HepG2 (cell line): ENCODE measurements at regions of chr15 and their contacts with region 1.

Region 1: GRCh38 chr15:43824302-43825246 is at the start of gene MFAP1:
- DNase-seq: peak; percentile 93
- ATAC-seq: peak; percentile 94
- H3K4me3 ChIP-seq: peak within 1 kb of the TSS; percentile 83 to 90 (median 84)
- H3K27ac ChIP-seq: peak within 1 kb of the TSS; percentile 82
- H3K4me1 ChIP-seq: peaks cover 55% of the 10 kb centered on the region
- H3K27me3 ChIP-seq: no peaks in the 10 kb centered on the region; a peak in 1 of 5 replicates
- CTCF ChIP-seq: no peak
- EP300 ChIP-seq: no peak
- POLR2A ChIP-seq: peak; percentile 93 to 94
- RAD21 ChIP-seq: no peak
- total RNA-seq, gene MFAP1: 39.5 and 56.9 TPM in 2 replicates

Region 2: GRCh38 chr15:43800286-43801141 is 24.1 kb before region 1 on chr15 and contains the start of gene HYPK:
- CTCF ChIA-PET with region 1: no interaction called
- POLR2A ChIA-PET with region 1: interaction called, 30 read pairs
- in situ Hi-C with region 1: no loop called
- intact Hi-C with region 1: no loop called
- DNase-seq: peak; percentile 73
- ATAC-seq: peak; percentile 82
- H3K4me3 ChIP-seq: peak within 1 kb of the TSS; percentile 80 to 94 (median 82)
- H3K27ac ChIP-seq: peak within 1 kb of the TSS; percentile 71
- H3K4me1 ChIP-seq: peaks cover 49% of the 10 kb centered on the region
- H3K27me3 ChIP-seq: no peaks in the 10 kb centered on the region; a peak in 1 of 5 replicates
- CTCF ChIP-seq: no peak
- EP300 ChIP-seq: peak in 1 of 2 experiments; percentile 35; a peak in 1 of 4 replicates
- POLR2A ChIP-seq: peak; percentile 73 to 86
- RAD21 ChIP-seq: peak; percentile 4; the same call in 1 of the 2 replicates
- total RNA-seq, gene HYPK: 9.4 and 13.5 TPM in 2 replicates